Activated naive CD4-positive, alpha-beta T cell treated with anti-CD3 and anti-CD28 coated beads for 36 hours (primary cell): ENCODE measurements at regions of chr1 and their contacts with region 1.

Region 1: GRCh38 chr1:15949453-15950245 is 26.3 kb downstream of the ZBTB17 start:
- DNase-seq: peak; percentile 80
- H3K4me3 Mint-ChIP-seq: peak overlapping the region; percentile 16
- H3K27ac Mint-ChIP-seq: peak overlapping the region; percentile 95
- H3K4me1 Mint-ChIP-seq: peaks cover 72% of the 10 kb centered on the region
- H3K27me3 Mint-ChIP-seq: no peaks in the 10 kb centered on the region

Region 2: DNA sequence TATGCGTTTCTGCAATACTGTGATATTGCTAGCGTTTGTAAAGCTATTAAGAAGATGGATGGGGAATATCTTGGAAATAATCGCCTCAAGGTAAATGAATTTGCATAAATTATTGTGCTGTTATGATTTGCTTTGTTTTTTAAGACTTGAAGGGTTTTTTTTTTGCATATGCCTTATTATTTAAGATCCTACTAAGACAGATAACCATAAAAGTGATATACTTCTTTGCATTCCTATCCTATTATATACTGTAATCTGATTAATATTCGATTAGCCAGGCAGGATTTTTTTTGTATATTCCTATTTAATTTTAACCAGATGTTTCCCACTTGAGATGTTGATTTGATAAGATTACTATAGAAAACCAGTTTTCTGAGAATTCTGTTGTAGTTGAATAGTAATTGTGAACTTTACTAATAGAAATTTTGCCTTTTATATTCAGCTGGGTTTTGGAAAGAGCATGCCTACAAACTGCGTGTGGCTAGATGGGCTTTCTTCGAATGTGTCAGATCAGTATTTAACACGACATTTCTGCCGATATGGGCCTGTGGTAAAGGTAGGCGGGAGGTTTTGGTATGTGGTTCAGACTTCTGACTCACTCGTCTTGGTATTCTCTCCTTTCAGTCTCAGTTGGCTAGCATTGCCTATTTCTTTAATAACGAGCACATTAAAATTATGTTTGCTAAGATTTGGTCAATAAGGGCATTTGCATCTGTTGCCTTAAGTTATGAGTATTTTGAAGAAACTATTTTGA is 30.5 kb before region 1 on chr1:
- CTCF ChIA-PET with region 1: no interaction called
- intact Hi-C with region 1: loop called (anchors 2 kb)
- DNase-seq: peak; percentile 82
- H3K4me3 Mint-ChIP-seq: no peak overlapping the region
- H3K27ac Mint-ChIP-seq: no peak overlapping the region
- H3K4me1 Mint-ChIP-seq: peaks cover 43% of the 10 kb centered on the region
- H3K27me3 Mint-ChIP-seq: no peaks in the 10 kb centered on the region